Common myeloid progenitor, CD34-positive (primary cell): ENCODE measurements at regions of chr11 and their contacts with region 1.

Region 1: DNA sequence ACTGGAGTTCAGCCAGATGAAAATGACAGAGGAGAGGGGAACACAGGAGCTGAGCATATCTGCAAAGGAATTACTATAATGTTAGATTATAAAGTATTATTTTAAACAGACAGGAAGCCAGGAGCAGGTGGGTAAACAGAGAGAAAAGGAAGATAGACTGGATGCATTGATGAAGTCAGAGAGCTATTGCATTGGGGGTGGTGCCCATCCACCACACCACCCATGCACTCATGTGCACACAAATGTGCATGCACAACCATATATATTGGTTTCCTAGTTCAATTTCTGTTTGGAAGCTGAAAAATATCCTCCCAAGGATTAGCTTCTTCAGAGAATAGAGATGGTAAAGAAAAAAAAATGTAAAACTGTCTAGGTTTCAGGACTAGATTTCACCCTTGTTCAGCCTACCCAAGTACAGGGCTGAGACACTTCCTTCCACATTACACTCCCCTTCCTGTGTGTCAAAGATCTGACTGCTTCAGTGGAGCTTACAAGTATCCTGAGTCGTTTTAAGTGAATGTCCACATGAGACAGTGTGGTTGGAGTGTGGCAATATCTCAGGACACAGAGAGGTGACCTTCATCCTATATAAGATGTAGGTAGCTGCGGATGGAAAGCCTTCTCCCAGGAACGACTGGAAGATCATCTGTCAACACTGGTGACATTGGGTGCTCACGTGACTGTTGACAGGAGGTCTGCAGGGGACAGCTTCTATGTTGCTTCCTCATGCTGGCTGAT is 12.2 kb upstream of the SMPD1 start:
- DNase-seq: peak; percentile 14 to 67 (median 57)
- H3K4me3 ChIP-seq: peak overlapping the region in 3 of 7 experiments; percentile 12 to 48 (median 25)
- H3K27ac ChIP-seq: peak overlapping the region in 1 of 2 experiments; percentile 54
- H3K4me1 ChIP-seq: peaks cover 4 to 17% (median 12%) of the 10 kb centered on the region in 4 experiments
- H3K27me3 ChIP-seq: no peaks in the 10 kb centered on the region

Region 2: GRCh38 chr11:6389921-6390724 is 12.1 kb after region 1 on chr11 and contains the start of gene SMPD1:
- CTCF ChIA-PET with region 1: interaction called, 27 read pairs
- POLR2A ChIA-PET with region 1: no interaction called
- DNase-seq: peak; percentile 88 to 96 (median 95)
- H3K4me3 ChIP-seq: peak within 1 kb of the TSS; percentile 20 to 91 (median 75)
- H3K27ac ChIP-seq: peak within 1 kb of the TSS; percentile 25 to 76
- H3K4me1 ChIP-seq: peaks cover 5 to 23% (median 17%) of the 10 kb centered on the region in 4 experiments
- H3K27me3 ChIP-seq: no peaks in the 10 kb centered on the region

Region 3: DNA sequence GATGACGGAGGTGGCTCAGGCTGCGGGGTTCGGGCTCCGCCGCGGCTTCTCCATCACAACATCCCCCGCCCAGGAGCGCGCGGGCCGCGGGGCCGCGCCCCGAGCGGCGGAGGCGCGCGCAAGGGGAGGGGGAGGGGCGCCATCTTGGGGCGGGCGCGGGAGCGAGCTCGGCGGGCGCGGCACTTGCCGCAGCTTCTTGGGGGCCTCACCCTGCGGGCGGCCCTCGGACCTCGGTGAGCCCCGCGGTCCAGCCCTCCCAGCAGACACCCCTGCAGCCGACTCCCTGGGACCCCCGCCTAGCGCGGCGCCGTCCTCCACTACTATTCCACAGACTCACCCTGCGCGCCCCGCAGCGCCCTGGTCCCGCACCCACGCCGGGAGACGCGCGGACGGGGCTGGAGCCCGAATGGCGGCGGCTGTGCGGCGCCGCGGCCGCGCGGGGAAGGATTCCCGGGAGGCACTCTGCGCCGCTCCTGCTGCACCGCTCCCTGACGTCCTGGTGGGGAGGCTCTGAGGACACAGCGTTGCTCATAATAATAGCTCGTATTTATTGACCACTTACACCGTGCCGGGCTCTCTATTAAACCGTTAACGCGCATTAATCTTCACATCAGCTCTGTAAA is 41.0 kb after region 1 on chr11 and contains the start of gene APBB1:
- CTCF ChIA-PET with region 1: interaction called, 11 read pairs
- POLR2A ChIA-PET with region 1: interaction called, 3 read pairs
- DNase-seq: peak; percentile 46 to 77 (median 72)
- H3K4me3 ChIP-seq: peak within 1 kb of the TSS; percentile 64 to 92 (median 82)
- H3K27ac ChIP-seq: peak within 1 kb of the TSS in 1 of 2 experiments; percentile 59
- H3K4me1 ChIP-seq: peaks cover 3 to 18% (median 13%) of the 10 kb centered on the region in 4 experiments
- H3K27me3 ChIP-seq: peaks cover 0 to 19% (median 1%) of the 10 kb centered on the region in 5 experiments

Region 4: DNA sequence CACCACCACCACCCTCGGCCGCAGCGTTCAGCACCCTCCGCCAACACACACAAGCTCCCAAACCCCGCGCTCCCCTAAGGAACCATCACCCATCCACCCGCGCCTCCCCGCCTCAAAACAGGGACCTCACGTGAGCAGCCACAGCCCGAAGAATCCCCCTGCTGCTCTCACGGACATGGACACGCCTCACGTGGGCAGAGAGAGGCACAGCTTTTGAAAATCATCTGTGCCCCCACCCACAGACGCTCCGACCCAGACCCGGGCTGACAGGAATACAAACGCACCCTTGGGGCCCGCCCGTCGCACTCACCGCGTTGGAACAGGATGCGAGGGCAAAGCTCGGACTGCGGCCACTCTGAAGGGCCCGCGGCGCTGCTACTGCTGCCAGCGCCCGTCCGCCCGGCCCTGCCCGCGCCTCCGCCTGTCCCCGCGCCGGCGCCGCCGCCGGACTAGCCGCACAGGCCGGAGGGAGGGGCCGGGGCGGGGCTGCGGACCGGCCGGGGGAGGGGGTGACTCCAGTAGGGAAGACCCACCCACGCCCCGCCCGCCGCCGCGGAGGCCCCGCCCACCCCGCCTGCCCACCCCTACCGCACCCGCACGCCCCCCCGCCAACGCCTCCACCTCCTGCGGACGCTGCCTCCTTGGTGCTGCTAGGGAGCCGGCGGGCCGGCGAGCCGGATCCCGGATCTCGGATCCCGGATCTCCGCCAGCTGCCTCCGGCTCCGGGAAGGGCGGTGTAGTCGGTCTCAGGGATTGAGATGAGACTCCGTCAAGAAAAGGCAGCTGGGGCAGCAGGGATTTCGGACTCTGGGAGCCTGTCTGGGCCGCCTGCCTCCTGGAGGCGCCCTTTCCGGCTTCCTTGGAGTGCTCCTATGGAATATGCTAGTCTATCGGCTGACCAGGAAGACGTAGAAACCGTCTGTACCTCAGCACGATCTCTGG is 95.7 kb after region 1 on chr11 and contains the start of gene TRIM3:
- CTCF ChIA-PET with region 1: interaction called, 24 read pairs
- POLR2A ChIA-PET with region 1: no interaction called
- DNase-seq: peak; percentile 69 to 73 (median 73)
- H3K4me3 ChIP-seq: peak within 1 kb of the TSS; percentile 67 to 91 (median 80)
- H3K27ac ChIP-seq: peak within 1 kb of the TSS in 1 of 2 experiments; percentile 54
- H3K4me1 ChIP-seq: peaks cover 10 to 39% (median 30%) of the 10 kb centered on the region in 4 experiments
- H3K27me3 ChIP-seq: no peaks in the 10 kb centered on the region